PC-9 (cell line): ENCODE measurements at regions of chr14 and their contacts with region 1.

Region 1: DNA sequence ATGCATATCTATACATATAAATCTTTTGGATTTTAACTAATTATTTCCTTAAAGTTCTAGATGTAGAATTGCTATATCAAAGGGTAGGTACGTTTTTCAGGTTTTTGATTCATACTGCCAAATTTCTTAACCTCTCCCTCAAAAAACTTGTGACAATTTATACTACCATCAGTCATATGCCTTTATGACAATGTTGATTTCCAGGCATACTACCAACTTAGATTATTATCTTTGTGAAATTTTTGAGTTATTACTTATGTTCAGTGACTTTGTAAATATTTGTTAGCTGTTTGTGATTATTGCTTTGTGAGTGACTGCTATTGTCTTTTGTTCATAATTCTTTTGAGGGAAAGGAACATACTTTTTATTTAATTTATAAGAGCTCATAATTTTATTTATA is 107.0 kb downstream of the SLC38A6 start:
- DNase-seq: no peak
- H3K4me3 ChIP-seq: no peak overlapping the region
- H3K27ac ChIP-seq: no peak overlapping the region
- H3K4me1 ChIP-seq: no peaks in the 10 kb centered on the region
- H3K27me3 ChIP-seq: no peaks in the 10 kb centered on the region
- CTCF ChIP-seq: no peak

Region 2: GRCh38 chr14:61043506-61043905 is 44.6 kb before region 1 on chr14:
- CTCF ChIA-PET with region 1: interaction called, 18 read pairs
- POLR2A ChIA-PET with region 1: no interaction called
- intact Hi-C with region 1: no loop called
- DNase-seq: no peak
- H3K4me3 ChIP-seq: no peak overlapping the region
- H3K27ac ChIP-seq: no peak overlapping the region
- H3K4me1 ChIP-seq: no peaks in the 10 kb centered on the region
- H3K27me3 ChIP-seq: no peaks in the 10 kb centered on the region
- CTCF ChIP-seq: no peak